ENCODE measurements at regions of chr21 and their contacts with region 1.

Region 1: GRCh38 chr21:37220981-37221664 is 46.0 kb downstream of the VPS26C start:
- DNase-seq: peak; percentile 76 to 95 (median 88)
- ATAC-seq: peak; percentile 90
- H3K4me3 ChIP-seq: peak overlapping the region; percentile 83
- H3K4me3 Mint-ChIP-seq: peak overlapping the region; percentile 85 to 95 (median 92)
- H3K27ac ChIP-seq: peak overlapping the region; percentile 81
- H3K27ac Mint-ChIP-seq: peak overlapping the region; percentile 85 to 95 (median 91)
- H3K4me1 ChIP-seq: peaks cover 25 to 33% of the 10 kb centered on the region in 2 donors
- H3K4me1 Mint-ChIP-seq: peaks cover 17 to 65% (median 56%) of the 10 kb centered on the region in 7 donors
- H3K27me3 ChIP-seq: no peaks in the 10 kb centered on the region
- H3K27me3 Mint-ChIP-seq: no peaks in the 10 kb centered on the region

Region 2: GRCh38 chr21:37207441-37208009 is 13.6 kb before region 1 on chr21:
- CTCF ChIA-PET with region 1: no interaction called
- POLR2A ChIA-PET with region 1: no interaction called
- intact Hi-C with region 1: loop called in 1 of 2 experiments (anchors 1 kb)
- DNase-seq: no peak
- ATAC-seq: peak; percentile 48
- H3K4me3 ChIP-seq: no peak overlapping the region
- H3K4me3 Mint-ChIP-seq: peak overlapping the region in 4 of 10 donors; percentile 3 to 77 (median 38)
- H3K27ac ChIP-seq: no peak overlapping the region
- H3K27ac Mint-ChIP-seq: peak overlapping the region in 4 of 9 donors; percentile 0 to 78 (median 44)
- H3K4me1 ChIP-seq: no peaks in the 10 kb centered on the region
- H3K4me1 Mint-ChIP-seq: peaks cover 10 to 19% (median 15%) of the 10 kb centered on the region in 7 donors
- H3K27me3 ChIP-seq: no peaks in the 10 kb centered on the region
- H3K27me3 Mint-ChIP-seq: peaks cover 0 to 7% (median 3%) of the 10 kb centered on the region in 5 donors

Region 3: DNA sequence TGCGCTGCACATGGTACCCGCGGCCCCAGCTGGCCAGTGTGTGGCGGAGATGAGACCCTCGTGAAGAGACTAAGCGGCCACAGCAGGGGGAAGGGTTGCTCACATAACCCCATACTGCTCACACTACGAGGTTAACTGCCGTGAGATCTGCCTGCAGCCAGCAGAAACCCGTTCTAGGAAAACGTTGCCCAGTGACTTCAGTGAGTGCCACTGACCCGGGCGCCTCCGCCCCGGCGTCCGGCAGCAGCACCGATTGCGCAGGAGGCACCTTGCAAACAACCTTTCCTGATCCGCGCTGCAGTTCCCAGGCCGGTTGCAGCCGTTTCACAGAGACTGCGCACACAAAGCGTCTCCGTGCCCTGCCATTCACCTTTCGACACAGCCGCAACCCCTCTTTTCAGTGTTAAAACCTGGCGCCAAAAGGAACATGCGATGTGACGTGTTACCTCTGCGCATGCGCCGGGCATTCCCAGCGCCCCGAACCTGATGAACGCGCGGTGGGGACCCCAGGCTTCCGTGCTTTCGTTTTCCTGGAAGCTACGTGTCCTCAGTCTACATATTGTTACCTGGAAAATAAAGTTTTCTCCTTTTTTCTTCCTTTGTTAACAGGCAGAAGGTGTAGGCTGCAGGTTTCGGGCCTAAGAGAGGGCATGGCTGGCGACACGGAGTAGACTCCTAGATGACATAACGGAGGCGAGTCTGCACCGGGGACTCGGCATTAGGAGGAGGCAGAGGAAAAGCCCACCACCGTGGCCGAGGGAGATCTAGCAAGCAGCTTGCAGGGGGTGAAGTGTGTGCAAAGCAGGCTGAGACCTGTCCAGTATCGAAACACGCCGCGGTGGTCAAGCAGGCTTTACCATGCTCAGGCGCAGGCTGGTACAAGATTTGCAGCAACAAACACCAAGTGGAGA is 37.1 kb after region 1 on chr21:
- CTCF ChIA-PET with region 1: interaction called, 4 read pairs
- POLR2A ChIA-PET with region 1: interaction called, 6 read pairs
- intact Hi-C with region 1: loop called (anchors 1 kb)
- DNase-seq: peak; percentile 58 to 87 (median 82)
- ATAC-seq: peak; percentile 76
- H3K4me3 ChIP-seq: peak overlapping the region; percentile 75
- H3K4me3 Mint-ChIP-seq: peak overlapping the region; percentile 79 to 92 (median 88)
- H3K27ac ChIP-seq: peak overlapping the region; percentile 79
- H3K27ac Mint-ChIP-seq: peak overlapping the region; percentile 58 to 98 (median 85)
- H3K4me1 ChIP-seq: peaks cover 15 to 17% of the 10 kb centered on the region in 2 donors
- H3K4me1 Mint-ChIP-seq: peaks cover 32 to 59% (median 53%) of the 10 kb centered on the region in 7 donors
- H3K27me3 ChIP-seq: no peaks in the 10 kb centered on the region
- H3K27me3 Mint-ChIP-seq: no peaks in the 10 kb centered on the region

Region 4: GRCh38 chr21:37496972-37497371 is 275.8 kb after region 1 on chr21:
- CTCF ChIA-PET with region 1: no interaction called
- POLR2A ChIA-PET with region 1: no interaction called
- intact Hi-C with region 1: loop called in 1 of 2 experiments (anchors 1 kb)
- DNase-seq: peak in 1 of 9 donors; percentile 10
- ATAC-seq: no peak
- H3K4me3 ChIP-seq: no peak overlapping the region
- H3K4me3 Mint-ChIP-seq: no peak overlapping the region
- H3K27ac ChIP-seq: no peak overlapping the region
- H3K27ac Mint-ChIP-seq: peak overlapping the region in 3 of 9 donors; percentile 8 to 71 (median 36)
- H3K4me1 ChIP-seq: no peaks in the 10 kb centered on the region
- H3K4me1 Mint-ChIP-seq: peaks cover 7 to 57% (median 29%) of the 10 kb centered on the region in 7 donors
- H3K27me3 ChIP-seq: no peaks in the 10 kb centered on the region
- H3K27me3 Mint-ChIP-seq: no peaks in the 10 kb centered on the region

Measured in naive thymus-derived CD4-positive, alpha-beta T cell (primary cell).